ENCODE measurements at regions of chr13 and their contacts with region 1.

Region 1: DNA sequence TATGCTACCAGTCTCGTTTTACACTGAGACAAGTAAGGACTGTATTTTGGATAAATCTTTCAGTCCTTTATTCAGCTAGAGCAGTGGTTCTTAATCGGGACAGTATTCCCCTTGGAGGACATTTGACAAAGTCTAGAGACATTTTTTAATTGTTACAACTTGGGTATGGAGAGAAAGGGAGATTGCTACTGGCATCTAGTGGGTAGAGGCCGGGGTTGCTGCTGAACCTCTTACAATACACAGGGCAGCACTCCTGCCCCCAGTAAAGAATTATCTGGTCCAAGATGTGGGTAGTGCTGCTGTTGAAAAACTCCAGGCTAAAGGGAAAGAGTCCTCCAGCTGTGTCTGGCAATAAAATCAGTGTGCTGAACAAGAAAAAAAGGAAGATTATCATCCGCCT is 334.8 kb downstream of the SLC7A1 start:
- DNase-seq: no peak
- H3K4me3 ChIP-seq: no peak overlapping the region
- H3K27ac ChIP-seq: no peak overlapping the region
- H3K4me1 ChIP-seq: no peaks in the 10 kb centered on the region
- CTCF ChIP-seq: peak; percentile 30; the same call in 1 of the 2 replicates

Region 2: DNA sequence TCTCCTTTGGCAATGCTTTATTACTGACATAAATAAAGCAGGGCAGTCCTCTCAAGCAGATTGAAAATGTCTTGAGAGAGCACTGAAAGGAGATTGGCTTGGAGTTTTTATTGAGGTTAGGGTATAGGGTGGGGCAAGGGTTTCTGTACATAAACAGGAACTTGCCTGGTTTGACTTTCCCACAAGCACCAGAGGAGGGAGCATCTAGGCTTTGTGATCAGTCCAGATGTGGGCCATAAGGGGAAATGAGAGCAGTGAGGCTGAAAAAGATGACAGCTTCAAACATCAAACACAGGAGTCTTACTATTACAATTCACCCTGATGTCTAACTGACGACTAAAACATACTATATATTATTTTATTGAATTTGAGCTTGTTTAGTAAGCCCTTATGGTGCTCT is 179.6 kb before region 1 on chr13:
- CTCF ChIA-PET with region 1: no interaction called
- POLR2A ChIA-PET with region 1: no interaction called
- intact Hi-C with region 1: loop called (anchors 1 kb)
- DNase-seq: peak; percentile 71
- H3K4me3 ChIP-seq: no peak overlapping the region
- H3K27ac ChIP-seq: no peak overlapping the region
- H3K4me1 ChIP-seq: peaks cover 3% of the 10 kb centered on the region
- CTCF ChIP-seq: peak; percentile 59

Region 3: DNA sequence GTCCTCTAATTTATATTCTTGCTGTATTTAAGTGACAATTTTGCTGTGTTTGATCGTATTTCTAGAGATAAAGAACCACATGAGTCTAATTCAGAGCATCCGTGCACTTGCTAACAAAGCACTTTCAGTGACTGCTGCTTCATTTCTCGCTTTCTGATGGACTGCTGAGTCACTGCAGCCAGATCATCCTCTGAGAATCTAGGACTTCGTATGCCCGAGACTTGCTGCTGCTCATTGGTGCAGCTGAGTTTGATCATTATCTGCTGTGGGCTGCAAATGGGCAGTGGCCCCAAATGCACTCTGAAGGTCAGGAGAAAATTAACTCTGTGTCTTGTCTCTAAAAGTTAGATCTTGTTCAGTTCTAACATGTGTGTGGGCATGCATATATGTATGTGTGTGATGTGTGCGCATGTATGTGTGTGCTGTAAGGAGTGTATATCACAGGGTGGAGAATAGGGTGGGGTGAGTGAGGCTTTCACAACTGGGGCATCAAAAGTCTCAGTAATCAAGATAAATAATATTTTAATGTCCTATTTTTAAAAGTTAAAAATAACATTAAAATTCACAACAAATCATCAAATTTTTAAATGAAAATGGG is 97.9 kb before region 1 on chr13:
- CTCF ChIA-PET with region 1: no interaction called
- POLR2A ChIA-PET with region 1: no interaction called
- intact Hi-C with region 1: no loop called
- DNase-seq: no peak
- H3K4me3 ChIP-seq: no peak overlapping the region
- H3K27ac ChIP-seq: no peak overlapping the region
- H3K4me1 ChIP-seq: no peaks in the 10 kb centered on the region
- CTCF ChIP-seq: no peak

Region 4: DNA sequence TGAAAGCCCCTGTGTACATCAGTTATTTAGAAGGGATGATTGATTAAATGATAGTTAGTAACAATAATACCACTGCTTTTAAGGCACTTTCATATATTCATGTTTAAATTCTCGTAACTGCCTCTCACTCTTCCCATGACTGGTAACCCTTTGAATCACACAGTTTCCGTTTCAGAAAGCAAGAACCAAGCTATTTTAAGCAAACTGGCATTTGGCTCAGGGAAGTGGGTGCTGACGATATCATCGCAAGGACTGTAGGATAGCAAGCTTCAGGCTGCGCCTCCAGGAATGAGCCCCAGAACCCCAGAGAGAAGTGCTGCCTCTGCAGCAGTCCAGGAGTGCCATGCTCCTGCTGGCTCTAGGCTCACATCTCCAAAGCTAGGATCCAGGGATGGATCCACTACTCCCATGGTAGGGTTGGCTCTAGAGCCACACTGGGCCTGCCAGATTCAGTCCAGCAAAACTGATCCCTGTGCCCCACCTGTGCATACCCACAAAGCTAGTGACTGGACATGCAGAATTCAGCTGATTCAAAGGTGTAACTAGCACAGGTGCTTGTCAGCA is 21.3 kb after region 1 on chr13:
- CTCF ChIA-PET with region 1: no interaction called
- POLR2A ChIA-PET with region 1: no interaction called
- intact Hi-C with region 1: no loop called
- DNase-seq: no peak
- H3K4me3 ChIP-seq: no peak overlapping the region
- H3K27ac ChIP-seq: no peak overlapping the region
- H3K4me1 ChIP-seq: no peaks in the 10 kb centered on the region
- CTCF ChIP-seq: no peak

Region 5: GRCh38 chr13:29435125-29435911 is 174.6 kb after region 1 on chr13:
- CTCF ChIA-PET with region 1: no interaction called
- POLR2A ChIA-PET with region 1: no interaction called
- intact Hi-C with region 1: no loop called
- DNase-seq: no peak
- H3K4me3 ChIP-seq: peak overlapping the region; percentile 25
- H3K27ac ChIP-seq: peak overlapping the region; percentile 95
- H3K4me1 ChIP-seq: peaks cover 55% of the 10 kb centered on the region
- CTCF ChIP-seq: no peak

Region 6: DNA sequence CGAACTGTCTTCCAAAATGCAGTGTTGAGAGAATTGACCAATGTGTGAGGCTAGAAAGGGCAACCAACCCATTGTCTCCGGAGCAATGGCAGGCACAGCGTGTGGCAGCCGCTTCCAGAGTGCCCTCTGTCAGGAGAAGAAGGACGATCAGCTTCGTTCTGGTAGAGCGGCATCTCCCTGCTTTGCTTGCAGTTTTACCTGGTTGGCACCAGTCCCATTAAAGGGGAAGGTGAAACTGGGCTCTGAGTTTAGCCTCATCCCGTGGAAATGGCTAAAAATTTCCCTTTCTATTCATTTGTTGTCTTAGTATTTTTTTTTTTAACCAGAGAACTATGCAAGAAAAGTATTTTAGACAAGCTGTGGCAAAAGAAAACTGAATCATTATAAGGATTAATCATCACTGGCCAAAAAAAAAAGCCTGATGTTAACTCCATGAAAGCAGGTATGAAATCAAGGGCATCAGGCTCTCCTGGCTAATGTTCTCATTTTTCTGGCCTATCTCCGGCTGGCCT is 416.3 kb after region 1 on chr13:
- CTCF ChIA-PET with region 1: no interaction called
- POLR2A ChIA-PET with region 1: no interaction called
- intact Hi-C with region 1: no loop called
- DNase-seq: no peak
- H3K4me3 ChIP-seq: no peak overlapping the region
- H3K27ac ChIP-seq: no peak overlapping the region
- H3K4me1 ChIP-seq: no peaks in the 10 kb centered on the region
- CTCF ChIP-seq: no peak

Measured in OCI-LY7 (cell line).